Activated CD4-positive, alpha-beta T cell treated with anti-CD3 and anti-CD28 coated beads for 36 hours (primary cell): ENCODE measurements at regions of chr3 and their contacts with region 1.

Region 1: GRCh38 chr3:185558395-185558794 is 6.0 kb upstream of the LIPH start:
- DNase-seq: no peak
- ATAC-seq: no peak
- H3K4me3 Mint-ChIP-seq: no peak overlapping the region
- H3K27ac Mint-ChIP-seq: no peak overlapping the region
- H3K4me1 Mint-ChIP-seq: peaks cover 14% of the 10 kb centered on the region
- H3K27me3 Mint-ChIP-seq: peaks cover 2% of the 10 kb centered on the region

Region 2: DNA sequence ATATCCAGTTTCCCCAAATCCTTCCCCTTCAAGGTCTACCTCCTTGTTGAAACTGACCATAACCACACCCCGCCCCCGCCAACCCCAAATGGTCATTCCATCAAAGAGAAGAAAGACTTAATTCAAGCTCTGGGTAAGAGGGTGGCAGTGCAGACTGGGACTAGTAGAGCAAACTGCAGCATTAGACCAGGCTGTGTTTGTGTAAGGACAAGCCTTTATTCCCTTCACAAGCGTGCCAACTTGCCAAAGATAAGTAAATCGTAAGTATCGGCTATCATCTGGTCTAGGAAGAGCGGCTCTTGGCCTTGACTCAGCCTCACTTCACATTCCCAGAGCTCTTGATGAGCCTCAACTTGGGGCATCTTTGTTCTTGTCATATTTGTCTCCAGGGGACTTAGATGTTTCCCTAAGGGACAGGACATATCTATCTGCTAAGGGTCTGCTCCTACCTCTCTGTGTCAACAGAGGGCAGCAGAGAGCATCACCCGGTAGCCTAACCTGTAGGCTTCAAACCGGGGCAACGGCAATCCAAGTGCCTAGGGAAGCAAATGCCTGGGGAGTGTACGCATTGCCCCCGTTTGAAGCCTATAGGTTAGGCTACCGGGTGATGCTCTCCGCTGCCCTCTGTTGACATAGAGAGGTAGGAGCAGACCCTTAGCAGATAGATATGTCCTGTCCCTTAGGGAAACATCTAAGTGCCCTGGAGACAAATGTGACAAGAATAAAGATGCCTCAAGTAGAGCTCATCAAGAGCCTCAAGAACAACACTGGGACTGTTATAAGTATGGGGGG is 204.4 kb before region 1 on chr3:
- CTCF ChIA-PET with region 1: interaction called, 3 read pairs
- POLR2A ChIA-PET with region 1: no interaction called
- intact Hi-C with region 1: loop called (anchors 1 kb)
- DNase-seq: peak; percentile 89
- ATAC-seq: peak; percentile 100
- H3K4me3 Mint-ChIP-seq: no peak overlapping the region
- H3K27ac Mint-ChIP-seq: no peak overlapping the region
- H3K4me1 Mint-ChIP-seq: no peaks in the 10 kb centered on the region
- H3K27me3 Mint-ChIP-seq: peaks cover 12% of the 10 kb centered on the region

Region 3: GRCh38 chr3:185460719-185461350 is 97.6 kb before region 1 on chr3:
- CTCF ChIA-PET with region 1: interaction called, 10 read pairs
- POLR2A ChIA-PET with region 1: no interaction called
- intact Hi-C with region 1: loop called in 1 of 2 experiments (anchors 5 kb)
- DNase-seq: no peak
- ATAC-seq: no peak
- H3K4me3 Mint-ChIP-seq: no peak overlapping the region
- H3K27ac Mint-ChIP-seq: no peak overlapping the region
- H3K4me1 Mint-ChIP-seq: no peaks in the 10 kb centered on the region
- H3K27me3 Mint-ChIP-seq: no peaks in the 10 kb centered on the region

Region 4: GRCh38 chr3:185498503-185499396 is 59.6 kb before region 1 on chr3 and contains the start of gene TMEM41A:
- CTCF ChIA-PET with region 1: interaction called, 3 read pairs
- POLR2A ChIA-PET with region 1: interaction called, 3 read pairs
- intact Hi-C with region 1: loop called in 1 of 2 experiments (anchors 1 kb)
- DNase-seq: peak; percentile 96
- ATAC-seq: peak; percentile 99
- H3K4me3 Mint-ChIP-seq: peak within 1 kb of the TSS; percentile 98
- H3K27ac Mint-ChIP-seq: peak within 1 kb of the TSS; percentile 91
- H3K4me1 Mint-ChIP-seq: peaks cover 18% of the 10 kb centered on the region
- H3K27me3 Mint-ChIP-seq: no peaks in the 10 kb centered on the region
- total RNA-seq, gene TMEM41A: 19.6 to 21.6 TPM

Region 5: GRCh38 chr3:185534511-185534910 is 23.9 kb before region 1 on chr3:
- CTCF ChIA-PET with region 1: interaction called, 18 read pairs
- POLR2A ChIA-PET with region 1: no interaction called
- intact Hi-C with region 1: no loop called
- DNase-seq: no peak
- ATAC-seq: no peak
- H3K4me3 Mint-ChIP-seq: no peak overlapping the region
- H3K27ac Mint-ChIP-seq: no peak overlapping the region
- H3K4me1 Mint-ChIP-seq: peaks cover 15% of the 10 kb centered on the region
- H3K27me3 Mint-ChIP-seq: no peaks in the 10 kb centered on the region

Region 6: DNA sequence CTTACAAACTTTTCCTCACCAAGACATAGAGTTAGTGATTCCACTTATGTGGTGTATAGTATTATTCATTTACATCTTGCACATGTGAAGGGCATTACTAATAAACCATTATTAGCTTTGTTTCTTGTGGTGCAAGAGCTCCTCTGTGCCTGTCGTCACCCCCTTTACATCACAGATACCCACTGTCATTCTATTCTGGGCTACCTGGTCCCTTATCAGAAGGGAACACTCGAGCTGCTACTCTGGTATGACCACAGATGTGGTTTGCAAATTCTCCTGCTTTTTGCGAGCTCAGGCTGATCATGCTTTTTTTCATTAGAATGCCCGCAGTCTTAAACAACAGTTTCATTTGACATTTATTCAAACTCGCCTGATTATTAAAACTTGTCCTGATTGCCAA is 13.8 kb after region 1 on chr3:
- CTCF ChIA-PET with region 1: interaction called, 27 read pairs
- POLR2A ChIA-PET with region 1: no interaction called
- intact Hi-C with region 1: no loop called
- DNase-seq: no peak
- ATAC-seq: no peak
- H3K4me3 Mint-ChIP-seq: no peak overlapping the region
- H3K27ac Mint-ChIP-seq: no peak overlapping the region
- H3K4me1 Mint-ChIP-seq: peaks cover 6% of the 10 kb centered on the region
- H3K27me3 Mint-ChIP-seq: no peaks in the 10 kb centered on the region